ENCODE measurements at regions of chr1 and their contacts with region 1.

Region 1: GRCh38 chr1:43073490-43074230 is 98.4 kb downstream of the EBNA1BP2 start:
- DNase-seq: peak; percentile 62 to 80 (median 74)
- ATAC-seq: peak; percentile 84 to 88
- H3K4me3 ChIP-seq: no peak overlapping the region
- H3K27ac ChIP-seq: no peak overlapping the region
- H3K4me1 ChIP-seq: no peaks in the 10 kb centered on the region
- H3K27me3 ChIP-seq: no peaks in the 10 kb centered on the region

Region 2: GRCh38 chr1:42586016-42586415 is 487.6 kb before region 1 on chr1:
- intact Hi-C with region 1: loop called in 1 of 4 experiments (anchors 10 kb)
- DNase-seq: no peak
- ATAC-seq: no peak
- H3K4me3 ChIP-seq: no peak overlapping the region
- H3K27ac ChIP-seq: no peak overlapping the region
- H3K4me1 ChIP-seq: no peaks in the 10 kb centered on the region
- H3K27me3 ChIP-seq: no peaks in the 10 kb centered on the region

Region 3: DNA sequence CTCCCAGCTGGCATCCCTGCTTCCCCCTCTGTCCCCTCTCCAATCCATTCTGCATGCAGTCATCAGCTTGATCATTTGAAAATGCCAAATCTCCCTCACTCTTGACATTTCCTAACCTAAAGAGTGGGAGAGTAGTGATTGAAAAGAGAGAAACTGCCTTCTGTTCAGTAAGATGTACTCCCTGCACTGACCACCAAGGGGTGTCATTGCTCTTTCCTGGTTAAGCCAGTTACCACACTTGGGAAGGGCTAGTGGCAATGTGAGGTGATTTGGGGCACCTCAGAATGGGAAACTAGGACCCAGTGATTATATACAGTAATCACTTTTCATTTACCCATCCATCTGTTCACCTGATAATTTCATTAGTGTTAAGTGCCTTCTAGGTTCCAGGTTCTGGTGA is 295.8 kb before region 1 on chr1:
- intact Hi-C with region 1: loop called in 2 of 4 experiments (anchors 10 kb)
- DNase-seq: no peak
- ATAC-seq: peak; percentile 52 to 57
- H3K4me3 ChIP-seq: no peak overlapping the region
- H3K27ac ChIP-seq: no peak overlapping the region
- H3K4me1 ChIP-seq: peaks cover 1% of the 10 kb centered on the region
- H3K27me3 ChIP-seq: no peaks in the 10 kb centered on the region

Region 4: GRCh38 chr1:42784946-42785693 is 288.5 kb before region 1 on chr1 and contains the start of gene TMEM269:
- intact Hi-C with region 1: loop called in 1 of 4 experiments (anchors 10 kb)
- DNase-seq: peak; percentile 32 to 74 (median 62)
- ATAC-seq: peak; percentile 52 to 60
- H3K4me3 ChIP-seq: peak within 1 kb of the TSS; percentile 34
- H3K27ac ChIP-seq: no peak within 1 kb of the TSS
- H3K4me1 ChIP-seq: no peaks in the 10 kb centered on the region
- H3K27me3 ChIP-seq: no peaks in the 10 kb centered on the region
- total RNA-seq, gene TMEM269: 0.06 TPM in 1 of 4 donors, not detected in the others

Region 5: DNA sequence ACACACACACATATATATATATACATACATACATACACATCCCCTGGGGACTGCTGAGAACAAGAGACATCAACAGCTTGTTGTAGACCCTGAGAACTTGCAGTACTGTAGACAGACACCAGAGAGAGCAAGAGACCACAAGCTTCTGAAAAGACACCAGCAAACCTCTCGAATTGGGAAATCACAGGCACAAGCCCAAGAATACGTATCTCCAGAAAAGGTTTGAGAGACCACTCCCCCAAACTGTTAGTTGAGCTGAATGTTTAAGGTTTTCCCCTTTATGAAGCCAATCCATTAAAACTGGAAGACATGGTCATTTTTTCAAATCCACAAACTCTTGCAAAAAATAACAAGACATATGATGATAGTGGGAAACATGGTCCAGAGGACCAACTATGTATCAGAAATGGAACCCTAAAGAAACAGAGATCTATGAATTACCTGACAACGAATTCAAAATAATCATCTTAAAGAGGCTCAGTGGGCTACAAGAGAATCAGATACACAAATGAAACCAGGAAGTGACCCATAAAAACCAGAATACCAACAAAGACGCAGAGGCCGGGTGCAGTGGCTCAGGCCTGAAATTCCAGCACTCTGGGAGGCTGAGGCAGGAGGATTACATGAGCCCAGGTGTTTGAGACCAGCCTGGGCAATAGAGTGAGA is 160.1 kb before region 1 on chr1:
- intact Hi-C with region 1: loop called in 3 of 4 experiments (anchors 2 kb)
- DNase-seq: no peak
- ATAC-seq: peak in 1 of 2 donors; percentile 65
- H3K4me3 ChIP-seq: no peak overlapping the region
- H3K27ac ChIP-seq: no peak overlapping the region
- H3K4me1 ChIP-seq: no peaks in the 10 kb centered on the region
- H3K27me3 ChIP-seq: no peaks in the 10 kb centered on the region

Region 6: DNA sequence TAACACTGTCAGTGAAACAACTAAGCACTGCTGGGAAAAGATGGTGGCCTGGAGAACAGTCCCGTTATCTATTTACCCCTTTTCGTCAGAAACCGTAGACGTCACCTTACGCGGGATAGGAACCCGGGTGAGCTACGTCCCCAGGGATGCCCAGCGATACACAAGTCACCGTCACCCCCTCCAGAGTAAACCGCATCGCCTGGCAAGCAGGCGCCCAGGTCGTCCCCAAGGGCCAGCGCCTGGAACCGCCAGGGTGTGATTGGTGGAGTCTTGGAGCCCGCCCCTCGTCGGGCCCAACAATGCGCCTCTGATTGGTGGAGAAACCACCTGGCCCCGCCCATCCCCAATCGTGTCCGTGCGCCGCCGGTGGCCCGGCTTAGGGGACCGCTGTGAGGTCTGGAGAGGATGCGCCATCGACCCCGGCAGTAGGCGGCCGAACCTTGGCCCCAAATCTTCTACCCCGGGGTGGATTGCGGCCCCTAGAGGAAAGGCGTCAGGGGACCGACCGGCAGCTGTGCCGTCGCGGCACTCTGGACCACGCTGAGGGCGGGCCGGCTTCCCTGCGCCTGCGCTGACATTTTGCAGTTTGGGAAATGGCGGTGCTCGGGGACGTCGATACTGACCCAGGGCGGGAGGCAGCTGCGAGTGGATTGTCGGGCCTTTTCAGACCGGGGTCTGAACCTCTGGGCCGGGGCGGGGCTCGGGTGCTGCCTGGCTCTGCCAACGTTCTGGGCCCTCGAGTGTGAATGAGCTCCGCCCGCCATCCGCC is 149.4 kb before region 1 on chr1:
- intact Hi-C with region 1: loop called in 1 of 4 experiments (anchors 5 kb)
- DNase-seq: peak; percentile 96 to 98 (median 98)
- ATAC-seq: peak; percentile 99
- H3K4me3 ChIP-seq: peak overlapping the region; percentile 84
- H3K27ac ChIP-seq: peak overlapping the region; percentile 83
- H3K4me1 ChIP-seq: peaks cover 2% of the 10 kb centered on the region
- H3K27me3 ChIP-seq: no peaks in the 10 kb centered on the region